ENCODE measurements at regions of chr5 and their contacts with region 1.

Region 1: DNA sequence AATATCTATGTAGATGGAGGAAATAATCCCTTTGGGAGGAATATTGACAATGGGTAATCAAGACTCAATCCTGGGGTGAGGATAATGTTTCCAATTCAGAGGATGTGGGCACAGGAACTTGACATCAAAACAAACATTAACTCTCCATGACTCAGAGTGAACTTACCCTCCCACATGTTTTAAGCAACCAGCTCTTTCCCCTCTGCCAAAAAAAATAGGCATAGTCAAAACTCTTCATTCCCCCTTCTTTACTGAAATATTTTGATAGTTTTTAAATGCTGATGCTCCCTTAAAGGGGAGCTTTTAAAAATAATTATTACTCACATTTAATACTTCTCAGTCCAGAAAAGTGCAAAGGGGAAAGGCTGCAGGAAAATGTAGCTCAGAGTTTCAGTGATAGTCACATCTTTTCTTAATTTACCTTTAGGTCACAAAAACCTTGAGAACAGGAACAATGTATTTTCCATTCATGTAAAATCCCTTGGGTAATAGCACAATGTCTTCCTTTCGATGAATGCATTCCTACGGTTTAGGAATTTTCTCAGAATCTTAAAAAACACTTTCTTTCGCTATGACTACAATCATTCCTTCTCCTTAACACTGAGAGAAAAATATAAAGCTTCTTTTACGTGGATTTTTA is 298.4 kb upstream of the GRAMD2B start:
- DNase-seq: no peak
- H3K4me3 ChIP-seq: no peak overlapping the region
- H3K27ac ChIP-seq: no peak overlapping the region
- H3K4me1 ChIP-seq: peaks cover 7% of the 10 kb centered on the region
- H3K27me3 ChIP-seq: no peaks in the 10 kb centered on the region
- CTCF ChIP-seq: no peak
- POLR2A ChIP-seq: no peak

Region 2: DNA sequence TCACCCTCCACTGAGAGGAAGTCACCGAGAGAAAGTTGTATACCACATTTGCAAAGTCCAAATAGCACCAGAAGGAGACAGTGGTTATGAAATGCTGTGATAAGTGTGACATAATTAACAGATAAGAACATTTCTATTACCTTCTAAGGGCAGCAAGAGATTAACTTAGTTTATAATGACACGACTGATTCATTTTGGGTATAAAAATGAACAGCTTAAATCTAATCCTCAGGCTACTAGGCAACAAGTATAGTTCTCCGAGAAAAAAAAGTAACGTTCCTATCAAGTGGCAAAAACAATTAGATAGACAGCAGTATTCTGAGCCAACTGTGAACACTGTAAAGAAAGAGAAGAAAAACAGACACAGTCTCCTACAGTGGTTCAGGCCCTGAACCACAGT is 132.8 kb before region 1 on chr5:
- CTCF ChIA-PET with region 1: no interaction called
- POLR2A ChIA-PET with region 1: no interaction called
- dilution Hi-C with region 1: no loop called
- intact Hi-C with region 1: no loop called
- DNase-seq: no peak
- H3K4me3 ChIP-seq: no peak overlapping the region
- H3K27ac ChIP-seq: no peak overlapping the region
- H3K4me1 ChIP-seq: no peaks in the 10 kb centered on the region
- H3K27me3 ChIP-seq: no peaks in the 10 kb centered on the region
- CTCF ChIP-seq: no peak
- POLR2A ChIP-seq: no peak

Region 3: GRCh38 chr5:126107381-126107780 is 17.4 kb before region 1 on chr5:
- CTCF ChIA-PET with region 1: no interaction called
- POLR2A ChIA-PET with region 1: no interaction called
- dilution Hi-C with region 1: no loop called
- intact Hi-C with region 1: no loop called
- DNase-seq: no peak
- H3K4me3 ChIP-seq: no peak overlapping the region
- H3K27ac ChIP-seq: no peak overlapping the region
- H3K4me1 ChIP-seq: no peaks in the 10 kb centered on the region
- H3K27me3 ChIP-seq: no peaks in the 10 kb centered on the region
- CTCF ChIP-seq: no peak
- POLR2A ChIP-seq: no peak

Region 4: DNA sequence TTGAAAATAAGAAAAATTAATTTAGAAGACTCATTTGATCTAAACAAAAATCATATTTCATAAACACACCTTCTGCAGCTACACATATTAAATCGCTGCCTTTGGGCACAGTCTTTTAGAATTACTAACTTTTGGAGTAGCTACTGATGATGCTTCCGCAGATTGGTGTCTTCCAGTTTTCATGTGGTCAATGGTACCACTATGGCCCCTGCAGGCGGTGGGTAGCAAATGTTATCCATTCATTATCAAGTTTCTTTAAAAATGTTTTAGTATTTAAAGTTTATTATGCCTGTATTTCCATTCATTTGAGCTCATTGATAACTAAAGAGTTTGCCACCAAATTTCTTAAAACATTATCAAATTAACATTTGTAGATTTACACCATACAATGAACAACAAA is 175.5 kb after region 1 on chr5:
- CTCF ChIA-PET with region 1: no interaction called
- POLR2A ChIA-PET with region 1: no interaction called
- dilution Hi-C with region 1: no loop called
- intact Hi-C with region 1: loop called (anchors 10 kb)
- DNase-seq: no peak
- H3K4me3 ChIP-seq: no peak overlapping the region
- H3K27ac ChIP-seq: no peak overlapping the region
- H3K4me1 ChIP-seq: no peaks in the 10 kb centered on the region
- H3K27me3 ChIP-seq: no peaks in the 10 kb centered on the region
- CTCF ChIP-seq: no peak
- POLR2A ChIP-seq: no peak